Esophagus muscularis mucosa (tissue), 4 donors: ENCODE measurements at regions of chrX and their contacts with region 1.

Region 1: GRCh38 chrX:130916636-130917422 is 13.8 kb upstream of the ENOX2 start:
- DNase-seq: no peak
- H3K4me3 ChIP-seq: no peak overlapping the region
- H3K27ac ChIP-seq: no peak overlapping the region
- H3K4me1 ChIP-seq: no peaks in the 10 kb centered on the region
- H3K27me3 ChIP-seq: no peaks in the 10 kb centered on the region
- CTCF ChIP-seq: peak; percentile 59 to 78 (median 66)
- EP300 ChIP-seq: no peak
- POLR2A ChIP-seq: no peak

Region 2: DNA sequence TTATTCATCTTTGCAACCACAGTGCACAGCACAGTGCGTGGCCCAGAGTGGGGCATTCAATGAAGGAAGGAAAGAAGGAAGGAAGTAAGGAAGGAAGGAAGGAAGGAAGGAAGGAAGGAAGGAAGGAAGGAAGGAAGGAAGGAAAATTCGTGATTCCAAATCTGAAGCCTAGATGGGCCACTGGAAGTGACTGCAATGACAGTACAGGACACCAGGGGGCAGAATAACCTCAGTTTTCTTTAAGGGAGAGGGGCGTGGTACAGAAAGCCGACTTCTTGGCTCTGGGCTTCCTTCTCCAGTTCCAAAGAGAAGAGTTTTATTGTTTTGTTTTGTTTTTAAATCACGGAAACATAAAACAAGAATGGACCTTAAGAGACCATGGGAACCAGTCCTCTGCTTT is 1309.9 kb before region 1 on chrX:
- intact Hi-C with region 1: loop called (anchors 10 kb)
- DNase-seq: no peak
- H3K4me3 ChIP-seq: no peak overlapping the region
- H3K27ac ChIP-seq: no peak overlapping the region
- H3K4me1 ChIP-seq: peaks cover 4 to 26% (median 12%) of the 10 kb centered on the region in 4 donors
- H3K27me3 ChIP-seq: no peaks in the 10 kb centered on the region
- CTCF ChIP-seq: peak; percentile 64 to 88 (median 75)
- EP300 ChIP-seq: no peak
- POLR2A ChIP-seq: no peak

Region 3: GRCh38 chrX:130339408-130340222 is 577.2 kb before region 1 on chrX and contains the start of gene SLC25A14:
- intact Hi-C with region 1: loop called (anchors 10 kb)
- DNase-seq: peak; percentile 91
- H3K4me3 ChIP-seq: peak within 1 kb of the TSS; percentile 69 to 76 (median 70)
- H3K27ac ChIP-seq: peak within 1 kb of the TSS; percentile 45 to 70 (median 58)
- H3K4me1 ChIP-seq: peaks cover 0 to 14% (median 9%) of the 10 kb centered on the region in 4 donors
- H3K27me3 ChIP-seq: no peaks in the 10 kb centered on the region
- CTCF ChIP-seq: no peak
- EP300 ChIP-seq: no peak
- POLR2A ChIP-seq: no peak
- total RNA-seq, gene SLC25A14: 4.0 to 9.6 (median 6.9) TPM

Region 4: GRCh38 chrX:130395331-130395730 is 521.5 kb before region 1 on chrX:
- intact Hi-C with region 1: loop called (anchors 5 kb)
- DNase-seq: no peak
- H3K4me3 ChIP-seq: no peak overlapping the region
- H3K27ac ChIP-seq: no peak overlapping the region
- H3K4me1 ChIP-seq: no peaks in the 10 kb centered on the region
- H3K27me3 ChIP-seq: no peaks in the 10 kb centered on the region
- CTCF ChIP-seq: no peak
- EP300 ChIP-seq: no peak
- POLR2A ChIP-seq: no peak

Region 5: DNA sequence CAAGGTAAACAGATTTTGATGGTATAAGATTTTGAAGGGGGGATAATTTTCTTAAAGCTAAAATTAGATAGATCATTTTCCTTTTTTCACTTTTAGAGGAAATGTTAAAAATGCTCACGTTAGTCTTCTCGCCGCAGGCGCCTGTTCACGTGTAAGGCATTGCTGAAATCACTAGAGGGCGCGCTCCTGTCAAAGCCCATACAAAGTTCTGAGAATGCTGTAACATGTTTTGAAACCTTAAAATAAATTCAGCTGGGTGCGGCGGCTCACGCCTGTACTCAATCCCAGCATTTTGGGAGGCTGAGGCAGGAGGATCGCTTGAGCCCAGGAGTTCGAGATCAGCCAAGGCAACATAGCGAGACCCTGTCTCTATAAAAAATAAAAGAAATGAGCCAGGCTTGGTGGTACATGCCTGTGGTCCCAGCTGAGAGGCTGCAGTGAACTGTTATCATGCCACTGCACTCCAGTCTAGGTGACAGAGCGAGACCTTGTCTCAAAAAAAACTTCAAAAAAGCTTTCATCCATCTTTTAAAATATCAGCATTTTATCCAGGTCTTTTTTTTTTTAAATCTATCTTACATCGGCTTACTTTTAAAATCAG is 377.0 kb before region 1 on chrX:
- intact Hi-C with region 1: loop called (anchors 5 kb)
- DNase-seq: no peak
- H3K4me3 ChIP-seq: no peak overlapping the region
- H3K27ac ChIP-seq: no peak overlapping the region
- H3K4me1 ChIP-seq: no peaks in the 10 kb centered on the region
- H3K27me3 ChIP-seq: no peaks in the 10 kb centered on the region
- CTCF ChIP-seq: peak; percentile 51 to 67 (median 53)
- EP300 ChIP-seq: no peak
- POLR2A ChIP-seq: no peak

Region 6: GRCh38 chrX:131082325-131082740 is 165.5 kb after region 1 on chrX:
- intact Hi-C with region 1: no loop called
- DNase-seq: no peak
- H3K4me3 ChIP-seq: no peak overlapping the region
- H3K27ac ChIP-seq: no peak overlapping the region
- H3K4me1 ChIP-seq: no peaks in the 10 kb centered on the region
- H3K27me3 ChIP-seq: peaks cover 0 to 34% (median 15%) of the 10 kb centered on the region in 4 donors
- CTCF ChIP-seq: no peak
- EP300 ChIP-seq: no peak
- POLR2A ChIP-seq: no peak